ENCODE measurements at regions of chr3 and their contacts with region 1.

Region 1: DNA sequence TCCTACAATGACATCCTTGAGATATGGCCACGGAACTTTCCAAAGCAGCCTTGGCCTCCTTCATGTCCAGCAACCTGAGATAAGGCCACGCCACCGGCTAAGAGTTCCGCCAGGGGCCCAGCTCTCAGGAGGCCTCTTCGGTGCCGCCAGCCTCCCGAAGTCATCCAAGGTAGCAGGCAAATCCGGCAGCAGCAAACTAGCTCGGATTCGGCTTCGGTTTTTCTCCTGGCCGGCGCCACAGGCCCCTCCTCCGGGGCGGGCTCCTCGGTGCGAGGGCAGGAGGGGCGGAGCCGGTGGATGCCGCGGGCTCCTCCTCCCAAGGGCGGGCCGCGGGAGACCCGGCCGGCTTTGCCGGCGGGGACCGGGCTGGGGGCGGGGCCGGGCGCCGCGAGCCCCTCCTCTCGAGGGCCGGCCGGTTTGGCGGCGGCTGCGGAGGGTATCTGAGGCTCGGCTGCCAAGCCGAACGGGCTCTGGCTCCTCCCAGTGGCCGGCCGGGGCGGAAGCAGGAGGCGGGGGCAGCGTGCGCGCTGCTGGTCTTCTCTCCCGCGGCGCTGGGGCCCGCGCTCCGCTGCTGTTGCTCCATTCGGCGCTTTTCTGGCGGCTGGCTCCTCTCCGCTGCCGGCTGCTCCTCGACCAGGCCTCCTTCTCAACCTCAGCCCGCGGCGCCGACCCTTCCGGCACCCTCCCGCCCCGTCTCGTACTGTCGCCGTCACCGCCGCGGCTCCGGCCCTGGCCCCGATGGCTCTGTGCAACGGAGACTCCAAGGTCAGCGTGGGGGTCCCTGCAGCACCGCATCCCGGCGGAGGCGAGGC is at the start of gene GMPS:
- DNase-seq: peak; percentile 97
- ATAC-seq: peak; percentile 93
- H3K4me3 Mint-ChIP-seq: peak within 1 kb of the TSS; percentile 99
- H3K27ac Mint-ChIP-seq: peak within 1 kb of the TSS; percentile 98
- H3K4me1 Mint-ChIP-seq: peaks cover 20% of the 10 kb centered on the region
- H3K27me3 Mint-ChIP-seq: no peaks in the 10 kb centered on the region
- total RNA-seq, gene GMPS: 154 to 161 TPM

Region 2: GRCh38 chr3:154120961-154121700 is 1749.2 kb before region 1 on chr3 and contains the start of gene ARHGEF26:
- CTCF ChIA-PET with region 1: no interaction called
- POLR2A ChIA-PET with region 1: interaction called, 3 read pairs
- intact Hi-C with region 1: loop called in 1 of 2 experiments (anchors 5 kb)
- DNase-seq: peak; percentile 88
- ATAC-seq: peak; percentile 70
- H3K4me3 Mint-ChIP-seq: peak within 1 kb of the TSS; percentile 69
- H3K27ac Mint-ChIP-seq: no peak within 1 kb of the TSS
- H3K4me1 Mint-ChIP-seq: peaks cover 22% of the 10 kb centered on the region
- H3K27me3 Mint-ChIP-seq: peaks cover 63% of the 10 kb centered on the region
- total RNA-seq, gene ARHGEF26: 0.14 to 0.16 TPM

Region 3: GRCh38 chr3:155753036-155753639 is 117.2 kb before region 1 on chr3:
- CTCF ChIA-PET with region 1: no interaction called
- POLR2A ChIA-PET with region 1: no interaction called
- intact Hi-C with region 1: loop called in 1 of 2 experiments (anchors 1 kb)
- DNase-seq: no peak
- ATAC-seq: peak; percentile 47
- H3K4me3 Mint-ChIP-seq: no peak overlapping the region
- H3K27ac Mint-ChIP-seq: no peak overlapping the region
- H3K4me1 Mint-ChIP-seq: no peaks in the 10 kb centered on the region
- H3K27me3 Mint-ChIP-seq: no peaks in the 10 kb centered on the region

Region 4: DNA sequence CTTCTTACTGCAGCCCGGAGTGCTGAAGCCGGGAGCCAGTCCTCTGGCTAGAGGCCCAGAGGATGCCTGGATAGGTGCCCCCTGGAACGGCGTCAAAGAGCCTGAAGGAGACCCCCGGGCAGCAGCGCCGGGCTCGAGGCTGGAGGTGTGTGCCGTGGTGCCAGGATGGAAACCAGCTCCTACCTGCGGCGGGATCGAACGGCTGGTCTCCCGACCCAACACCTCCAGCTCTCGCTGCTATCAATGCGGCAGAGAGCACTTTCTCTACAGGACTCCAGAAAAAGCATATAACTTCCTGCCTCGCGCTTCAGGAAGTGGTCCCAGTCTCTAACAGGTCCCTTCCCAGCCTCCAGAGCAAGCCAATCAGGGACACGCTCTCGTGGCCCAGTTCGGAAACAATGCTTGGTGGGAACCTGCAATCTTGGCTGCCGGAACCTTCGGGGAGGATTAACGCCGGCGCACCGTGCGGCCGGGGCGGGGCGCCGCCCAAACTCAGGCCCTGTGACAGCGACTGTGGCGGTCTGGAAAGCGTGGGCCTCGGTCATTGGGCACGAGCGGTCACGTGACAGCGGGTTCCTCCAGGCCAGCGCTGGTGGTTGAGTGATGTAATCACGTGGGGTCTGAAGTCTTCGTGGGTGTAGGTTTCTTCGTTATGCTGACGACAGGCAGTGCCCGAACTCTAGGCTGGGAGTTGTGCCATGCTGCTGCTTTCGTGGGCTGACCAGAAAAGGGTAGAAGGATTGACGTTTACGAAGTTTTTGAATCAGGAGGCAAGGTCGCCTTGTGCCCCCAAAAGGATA is 16.0 kb before region 1 on chr3 and contains the start of gene SLC33A1:
- CTCF ChIA-PET with region 1: interaction called, 12 read pairs
- POLR2A ChIA-PET with region 1: interaction called, 36 read pairs
- intact Hi-C with region 1: loop called (anchors 1 kb)
- DNase-seq: peak; percentile 99
- ATAC-seq: peak; percentile 94
- H3K4me3 Mint-ChIP-seq: peak within 1 kb of the TSS; percentile 99
- H3K27ac Mint-ChIP-seq: peak within 1 kb of the TSS; percentile 99
- H3K4me1 Mint-ChIP-seq: peaks cover 33% of the 10 kb centered on the region
- H3K27me3 Mint-ChIP-seq: no peaks in the 10 kb centered on the region
- total RNA-seq, gene SLC33A1: 19.2 to 19.9 TPM

Region 5: DNA sequence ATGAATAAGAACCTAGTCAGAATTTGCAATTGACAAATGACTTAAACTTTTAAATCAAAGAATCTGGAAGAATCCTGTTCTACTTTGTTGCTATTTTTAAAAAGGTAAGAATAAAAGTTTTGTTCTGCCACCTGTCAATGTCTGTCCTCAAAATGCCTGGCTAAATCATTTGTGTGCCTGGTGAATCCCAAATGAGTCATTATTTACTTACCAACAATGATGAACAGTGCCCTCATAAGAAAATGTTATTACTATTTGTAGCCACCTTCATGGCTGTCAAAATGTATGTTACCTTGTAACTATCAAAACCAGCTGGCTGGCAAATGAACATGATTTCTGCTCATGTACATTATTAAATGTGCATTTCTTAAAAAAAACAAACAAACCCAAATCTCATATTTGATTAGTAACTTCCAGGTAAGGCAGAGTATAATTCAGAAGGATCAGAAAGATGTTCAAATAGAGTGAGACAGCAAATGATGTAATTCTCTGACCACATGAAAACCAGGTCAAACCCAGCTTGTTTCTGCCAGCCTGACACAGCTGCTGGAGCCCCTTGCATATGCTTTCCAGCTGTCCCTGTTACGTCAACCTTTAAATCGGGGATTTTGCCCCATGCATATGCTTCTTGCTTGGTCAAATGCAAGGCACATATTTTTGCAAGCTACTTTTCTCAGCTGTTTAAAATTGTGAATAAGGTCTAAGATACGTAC is 546.7 kb after region 1 on chr3:
- CTCF ChIA-PET with region 1: no interaction called
- POLR2A ChIA-PET with region 1: no interaction called
- intact Hi-C with region 1: no loop called
- DNase-seq: no peak
- ATAC-seq: no peak
- H3K4me3 Mint-ChIP-seq: no peak overlapping the region
- H3K27ac Mint-ChIP-seq: no peak overlapping the region
- H3K4me1 Mint-ChIP-seq: no peaks in the 10 kb centered on the region
- H3K27me3 Mint-ChIP-seq: peaks cover 10% of the 10 kb centered on the region

Region 6: GRCh38 chr3:156483961-156484787 is 613.8 kb after region 1 on chr3:
- CTCF ChIA-PET with region 1: no interaction called
- POLR2A ChIA-PET with region 1: no interaction called
- intact Hi-C with region 1: loop called in 1 of 2 experiments (anchors 10 kb)
- DNase-seq: peak; percentile 63
- ATAC-seq: peak; percentile 76
- H3K4me3 Mint-ChIP-seq: peak overlapping the region; percentile 69
- H3K27ac Mint-ChIP-seq: peak overlapping the region; percentile 92
- H3K4me1 Mint-ChIP-seq: peaks cover 35% of the 10 kb centered on the region
- H3K27me3 Mint-ChIP-seq: no peaks in the 10 kb centered on the region

Measured in activated CD4-positive, alpha-beta T cell treated with anti-CD3 and anti-CD28 coated beads for 36 hours (primary cell).